ENCODE measurements at regions of chr9 and their contacts with region 1.

Region 1: GRCh38 chr9:32384364-32385151 is at the start of gene ACO1:
- DNase-seq: peak; percentile 75
- H3K4me3 ChIP-seq: peak within 1 kb of the TSS; percentile 55 to 66
- H3K27ac ChIP-seq: peak within 1 kb of the TSS; percentile 65 to 79
- H3K4me1 ChIP-seq: no peaks in the 10 kb centered on the region
- H3K27me3 ChIP-seq: no peaks in the 10 kb centered on the region
- CTCF ChIP-seq: peak in 3 of 4 experiments; percentile 12 to 14 (median 13)
- POLR2A ChIP-seq: peak; percentile 90
- total RNA-seq, gene ACO1: 31.7 to 66.6 TPM

Region 2: GRCh38 chr9:32431940-32432555 is 47.5 kb after region 1 on chr9:
- intact Hi-C with region 1: loop called (anchors 5 kb)
- DNase-seq: peak; percentile 40
- H3K4me3 ChIP-seq: no peak overlapping the region
- H3K27ac ChIP-seq: no peak overlapping the region
- H3K4me1 ChIP-seq: no peaks in the 10 kb centered on the region
- H3K27me3 ChIP-seq: no peaks in the 10 kb centered on the region
- CTCF ChIP-seq: peak in 3 of 4 experiments; percentile 46 to 50 (median 48)
- POLR2A ChIP-seq: no peak

Region 3: DNA sequence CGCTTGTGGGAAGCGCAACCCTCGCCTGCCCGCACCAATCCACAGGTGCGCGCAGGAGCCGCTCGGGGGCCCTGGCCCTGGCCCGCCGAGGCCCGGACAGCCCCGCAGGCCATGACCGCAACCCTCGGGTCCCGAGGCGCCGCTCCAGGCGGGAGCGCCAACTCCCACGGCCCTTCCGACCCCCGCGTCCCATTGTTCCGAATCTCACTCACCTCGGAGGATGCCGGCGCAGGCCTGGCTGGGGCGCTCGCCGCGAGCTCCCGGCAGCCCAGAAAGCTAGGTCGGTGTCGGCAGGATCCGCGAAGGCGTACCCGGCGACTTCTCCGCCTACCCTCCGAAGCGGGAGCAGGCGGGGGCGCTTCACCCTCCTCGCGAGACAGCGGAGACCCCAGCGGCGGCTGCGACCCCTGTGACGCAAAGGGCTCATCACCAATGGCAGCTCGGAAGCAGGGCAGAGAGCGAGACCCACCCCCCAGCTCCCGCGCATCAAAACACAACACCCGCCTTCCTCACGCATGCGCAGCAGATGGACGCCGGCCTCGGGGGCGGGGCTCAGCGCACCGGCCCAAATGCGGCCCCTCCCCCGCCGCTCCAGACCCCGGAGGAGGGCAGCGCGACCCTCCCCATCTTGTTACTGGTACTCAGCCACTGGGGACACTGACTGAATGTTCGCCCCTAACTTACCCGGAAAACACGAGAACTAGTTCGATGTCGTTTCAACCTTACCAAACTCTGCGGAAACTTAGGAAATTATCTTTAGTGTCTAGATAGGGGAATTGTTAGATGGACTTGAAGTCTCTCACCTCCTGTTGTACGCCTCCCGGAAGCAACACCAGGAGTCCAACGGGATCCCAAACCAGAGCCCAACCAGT is 166.2 kb after region 1 on chr9:
- intact Hi-C with region 1: loop called (anchors 2 kb)
- DNase-seq: peak; percentile 92
- H3K4me3 ChIP-seq: peak overlapping the region; percentile 72 to 74
- H3K27ac ChIP-seq: peak overlapping the region; percentile 91 to 94
- H3K4me1 ChIP-seq: no peaks in the 10 kb centered on the region
- H3K27me3 ChIP-seq: no peaks in the 10 kb centered on the region
- CTCF ChIP-seq: peak in 1 of 4 experiments; percentile 17
- POLR2A ChIP-seq: peak; percentile 69

Region 4: DNA sequence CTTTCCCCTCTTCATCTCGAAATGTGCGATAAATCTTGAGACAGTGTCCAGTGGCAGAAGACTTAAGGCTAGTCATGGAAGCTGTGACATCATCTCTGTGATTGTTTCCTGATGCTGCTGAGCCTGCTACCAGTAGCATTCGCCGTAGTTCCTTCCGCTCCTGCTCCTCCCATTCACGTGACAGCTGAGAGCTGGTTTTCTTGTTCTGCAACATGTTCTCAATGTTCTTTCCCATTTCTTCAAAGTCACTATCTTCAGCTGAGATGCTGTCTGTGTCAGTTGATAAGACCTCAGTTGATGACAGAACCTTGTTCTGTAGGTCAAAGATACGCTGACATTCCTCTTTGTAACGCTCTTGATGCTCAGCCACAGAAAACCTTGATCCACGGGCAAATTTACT is 247.4 kb after region 1 on chr9:
- intact Hi-C with region 1: no loop called
- DNase-seq: no peak
- H3K4me3 ChIP-seq: no peak overlapping the region
- H3K27ac ChIP-seq: no peak overlapping the region
- H3K4me1 ChIP-seq: no peaks in the 10 kb centered on the region
- H3K27me3 ChIP-seq: no peaks in the 10 kb centered on the region
- CTCF ChIP-seq: no peak
- POLR2A ChIP-seq: no peak

Measured in prostate gland (tissue), 2 donors.